Naive thymus-derived CD4-positive, alpha-beta T cell (primary cell): ENCODE measurements at regions of chr2 and their contacts with region 1.

Region 1: GRCh38 chr2:216188956-216189355 is 79.8 kb downstream of the XRCC5 start:
- DNase-seq: no peak
- ATAC-seq: no peak
- H3K4me3 ChIP-seq: no peak overlapping the region
- H3K4me3 Mint-ChIP-seq: no peak overlapping the region
- H3K27ac ChIP-seq: no peak overlapping the region
- H3K27ac Mint-ChIP-seq: peak overlapping the region in 8 of 9 donors; percentile 2 to 73 (median 57)
- H3K4me1 ChIP-seq: no peaks in the 10 kb centered on the region
- H3K4me1 Mint-ChIP-seq: peaks cover 47 to 68% (median 61%) of the 10 kb centered on the region in 7 donors
- H3K27me3 ChIP-seq: no peaks in the 10 kb centered on the region
- H3K27me3 Mint-ChIP-seq: no peaks in the 10 kb centered on the region

Region 2: DNA sequence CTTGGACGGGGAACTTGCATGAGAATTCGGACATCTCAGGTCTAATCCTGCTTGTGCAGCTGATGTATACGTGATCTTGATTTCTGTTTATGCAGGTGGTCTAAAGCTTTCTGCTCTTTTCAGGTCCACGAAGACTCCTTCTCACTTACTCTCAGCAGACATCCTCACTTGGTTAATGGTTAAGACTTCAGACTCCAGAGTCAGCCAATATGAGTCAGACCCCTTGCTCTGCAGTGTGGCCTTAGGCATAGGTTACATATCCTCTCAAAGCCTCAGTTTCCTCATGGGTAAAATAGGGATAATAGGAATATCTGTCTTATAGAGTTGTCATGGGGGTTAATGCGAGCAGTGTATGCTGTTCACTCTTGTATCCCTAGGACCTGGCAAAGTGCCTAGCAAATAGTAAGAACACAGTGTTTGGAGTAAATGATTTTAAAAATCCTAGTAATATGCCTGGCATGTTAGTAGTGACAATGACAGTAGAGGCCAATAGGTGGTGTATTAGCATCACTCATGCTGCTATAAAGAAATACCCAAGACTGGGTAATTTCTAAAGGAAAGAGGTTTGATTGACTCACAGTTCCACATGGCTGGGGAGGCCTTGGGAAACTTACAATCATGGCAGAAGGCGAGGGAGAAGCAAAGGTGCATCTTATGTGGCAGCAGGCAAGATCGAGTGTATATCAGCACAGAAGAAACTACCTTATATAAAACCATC is 37.5 kb before region 1 on chr2:
- CTCF ChIA-PET with region 1: no interaction called
- POLR2A ChIA-PET with region 1: no interaction called
- intact Hi-C with region 1: loop called in 1 of 2 experiments (anchors 5 kb)
- DNase-seq: no peak
- ATAC-seq: no peak
- H3K4me3 ChIP-seq: no peak overlapping the region
- H3K4me3 Mint-ChIP-seq: no peak overlapping the region
- H3K27ac ChIP-seq: no peak overlapping the region
- H3K27ac Mint-ChIP-seq: peak overlapping the region in 7 of 9 donors; percentile 13 to 73 (median 43)
- H3K4me1 ChIP-seq: no peaks in the 10 kb centered on the region
- H3K4me1 Mint-ChIP-seq: peaks cover 21 to 70% (median 37%) of the 10 kb centered on the region in 7 donors
- H3K27me3 ChIP-seq: no peaks in the 10 kb centered on the region
- H3K27me3 Mint-ChIP-seq: no peaks in the 10 kb centered on the region